Endothelial cell of umbilical vein (primary cell): ENCODE measurements at regions of chr14 and their contacts with region 1.

Region 1: DNA sequence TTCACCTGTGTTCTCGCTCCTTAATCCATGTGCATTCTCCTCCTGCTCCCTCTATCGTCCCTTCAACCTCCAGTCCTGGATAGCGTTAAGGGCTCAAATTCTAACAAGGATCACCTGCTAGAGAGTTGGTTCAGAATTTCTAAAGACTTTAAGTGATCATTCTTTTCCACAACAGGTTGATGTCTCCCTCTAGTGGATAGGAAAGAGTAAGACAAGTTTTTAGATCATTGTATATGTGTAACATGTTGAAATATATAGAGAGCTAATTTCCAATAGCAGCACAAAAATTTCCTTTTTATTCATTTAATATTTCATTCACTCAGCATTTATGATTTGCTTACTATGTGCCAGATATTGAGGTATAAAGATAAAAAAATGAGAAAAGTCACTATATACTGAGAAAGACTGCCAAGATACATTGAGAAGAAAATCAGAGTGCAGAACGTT is 9.3 kb upstream of the ESR2 start:
- DNase-seq: peak; percentile 71
- H3K4me3 ChIP-seq: no peak overlapping the region
- H3K27ac ChIP-seq: no peak overlapping the region
- H3K4me1 ChIP-seq: no peaks in the 10 kb centered on the region
- H3K27me3 ChIP-seq: no peaks in the 10 kb centered on the region
- CTCF ChIP-seq: peak; percentile 48 to 50
- POLR2A ChIP-seq: no peak

Region 2: DNA sequence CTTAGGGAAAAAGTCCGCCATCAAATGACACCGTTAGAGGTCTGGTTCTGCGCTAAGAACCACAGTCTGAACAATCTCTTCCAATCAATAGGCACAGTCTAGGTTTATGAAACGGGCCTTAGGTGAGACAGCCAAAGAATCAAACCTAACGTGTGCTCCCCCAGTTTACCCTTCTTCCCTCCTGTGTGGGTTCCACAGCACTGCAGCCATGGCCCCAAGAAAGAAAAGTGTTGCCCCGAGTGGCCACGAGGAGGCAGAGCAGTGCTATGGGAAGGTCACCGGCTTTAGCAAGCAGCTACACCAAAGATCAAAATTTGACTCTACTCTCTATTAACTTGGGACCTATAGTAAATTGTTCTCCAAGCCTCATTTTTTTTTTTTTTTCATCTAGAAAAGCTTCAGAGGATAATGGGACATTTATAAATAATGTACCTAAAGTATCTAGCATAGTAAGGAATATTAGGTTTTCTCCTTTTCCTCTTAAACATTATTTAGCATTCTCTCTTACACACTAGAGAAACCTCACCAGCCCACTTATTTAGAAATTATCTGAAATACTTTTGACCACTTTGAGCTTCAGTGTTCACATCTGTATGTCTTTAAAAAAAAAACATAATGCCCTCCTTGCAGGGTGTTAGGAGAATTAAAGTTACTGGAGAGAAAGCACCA is 914.6 kb before region 1 on chr14:
- CTCF ChIA-PET with region 1: interaction called, 12 read pairs
- POLR2A ChIA-PET with region 1: no interaction called
- dilution Hi-C with region 1: no loop called
- intact Hi-C with region 1: no loop called
- DNase-seq: peak; percentile 75
- H3K4me3 ChIP-seq: no peak overlapping the region
- H3K27ac ChIP-seq: no peak overlapping the region
- H3K4me1 ChIP-seq: no peaks in the 10 kb centered on the region
- H3K27me3 ChIP-seq: no peaks in the 10 kb centered on the region
- CTCF ChIP-seq: peak; percentile 73 to 81
- POLR2A ChIP-seq: no peak

Region 3: DNA sequence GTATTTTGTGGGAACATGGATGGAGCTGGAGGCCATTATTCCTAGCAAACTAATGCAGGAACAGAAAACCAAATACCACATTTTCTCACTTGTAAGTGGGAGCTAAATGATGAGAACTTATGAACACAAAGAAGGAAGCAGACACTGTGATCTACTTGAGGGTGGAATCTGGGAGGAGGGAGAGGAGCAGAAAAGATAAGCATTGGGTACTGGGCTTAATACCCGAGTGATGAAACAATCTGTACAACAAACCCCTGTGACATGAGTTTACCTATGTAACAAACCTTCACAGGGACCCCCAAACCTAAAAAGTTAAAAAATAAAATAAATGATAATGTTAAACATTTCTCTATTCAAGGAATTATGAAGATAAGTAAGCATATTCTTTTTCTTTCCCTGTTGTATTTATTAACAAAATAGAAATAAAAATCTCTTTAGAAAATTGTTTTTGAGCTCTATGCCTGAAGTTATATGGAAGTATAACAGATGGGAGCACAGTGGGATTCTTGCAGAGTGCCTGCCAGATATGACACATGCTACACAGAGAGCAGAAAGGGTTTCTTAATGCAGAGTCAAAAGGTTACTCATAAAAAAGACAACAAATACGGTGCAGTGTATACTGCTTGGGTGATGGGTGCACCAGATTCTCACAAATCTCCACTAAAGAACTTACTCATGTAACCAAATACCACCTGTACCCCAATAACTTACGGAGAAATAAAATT is 502.7 kb before region 1 on chr14:
- CTCF ChIA-PET with region 1: interaction called, 103 read pairs
- POLR2A ChIA-PET with region 1: no interaction called
- dilution Hi-C with region 1: no loop called
- intact Hi-C with region 1: loop called (anchors 1 kb)
- DNase-seq: no peak
- H3K4me3 ChIP-seq: no peak overlapping the region
- H3K27ac ChIP-seq: no peak overlapping the region
- H3K4me1 ChIP-seq: peaks cover 2% of the 10 kb centered on the region
- H3K27me3 ChIP-seq: no peaks in the 10 kb centered on the region
- CTCF ChIP-seq: no peak
- POLR2A ChIP-seq: no peak

Region 4: DNA sequence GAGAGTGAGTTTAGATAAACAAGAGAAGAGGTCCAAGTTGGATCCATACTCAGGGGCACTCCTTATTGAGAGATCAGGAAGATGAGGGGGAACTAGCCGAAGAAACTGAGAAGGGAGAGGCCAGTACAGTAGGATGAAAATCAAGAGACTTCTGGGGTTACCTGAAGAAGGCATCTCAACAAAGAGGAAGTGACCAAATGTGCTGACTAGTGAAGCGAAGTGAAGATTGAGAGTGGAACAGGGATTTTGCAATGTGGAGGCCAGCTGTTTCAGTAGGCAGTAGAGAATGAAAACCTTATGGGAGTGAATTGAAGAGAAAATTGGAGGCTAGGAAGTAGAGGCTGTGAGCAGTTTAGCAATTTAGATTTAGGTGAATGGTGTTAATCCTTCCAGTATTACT is 297.7 kb before region 1 on chr14:
- CTCF ChIA-PET with region 1: interaction called, 155 read pairs
- POLR2A ChIA-PET with region 1: no interaction called
- dilution Hi-C with region 1: no loop called
- intact Hi-C with region 1: loop called (anchors 1 kb)
- DNase-seq: no peak
- H3K4me3 ChIP-seq: no peak overlapping the region
- H3K27ac ChIP-seq: no peak overlapping the region
- H3K4me1 ChIP-seq: no peaks in the 10 kb centered on the region
- H3K27me3 ChIP-seq: no peaks in the 10 kb centered on the region
- CTCF ChIP-seq: no peak
- POLR2A ChIP-seq: no peak

Region 5: DNA sequence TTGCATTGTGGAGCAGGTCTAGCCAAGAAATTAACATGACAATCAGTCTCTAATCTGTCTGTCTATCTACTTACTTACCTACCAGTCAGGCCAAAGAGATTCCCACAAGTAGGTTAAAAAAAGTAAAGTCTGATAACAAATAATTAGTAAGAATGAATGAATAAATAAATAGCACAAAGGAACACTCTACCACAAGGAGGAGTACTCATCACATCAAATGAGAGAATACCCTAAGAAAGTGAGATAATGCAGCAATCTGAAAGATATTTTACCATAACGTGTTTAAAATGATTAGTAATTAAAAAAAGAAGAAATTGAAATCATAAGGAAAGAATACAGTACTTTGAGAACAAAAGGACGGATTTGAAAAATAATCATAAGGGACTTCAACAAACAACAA is 263.4 kb before region 1 on chr14:
- CTCF ChIA-PET with region 1: interaction called, 79 read pairs
- POLR2A ChIA-PET with region 1: no interaction called
- dilution Hi-C with region 1: no loop called
- intact Hi-C with region 1: loop called (anchors 1 kb)
- DNase-seq: peak; percentile 28
- H3K4me3 ChIP-seq: no peak overlapping the region
- H3K27ac ChIP-seq: no peak overlapping the region
- H3K4me1 ChIP-seq: no peaks in the 10 kb centered on the region
- H3K27me3 ChIP-seq: no peaks in the 10 kb centered on the region
- CTCF ChIP-seq: peak in 1 of 2 donors; percentile 9
- POLR2A ChIP-seq: no peak

Region 6: DNA sequence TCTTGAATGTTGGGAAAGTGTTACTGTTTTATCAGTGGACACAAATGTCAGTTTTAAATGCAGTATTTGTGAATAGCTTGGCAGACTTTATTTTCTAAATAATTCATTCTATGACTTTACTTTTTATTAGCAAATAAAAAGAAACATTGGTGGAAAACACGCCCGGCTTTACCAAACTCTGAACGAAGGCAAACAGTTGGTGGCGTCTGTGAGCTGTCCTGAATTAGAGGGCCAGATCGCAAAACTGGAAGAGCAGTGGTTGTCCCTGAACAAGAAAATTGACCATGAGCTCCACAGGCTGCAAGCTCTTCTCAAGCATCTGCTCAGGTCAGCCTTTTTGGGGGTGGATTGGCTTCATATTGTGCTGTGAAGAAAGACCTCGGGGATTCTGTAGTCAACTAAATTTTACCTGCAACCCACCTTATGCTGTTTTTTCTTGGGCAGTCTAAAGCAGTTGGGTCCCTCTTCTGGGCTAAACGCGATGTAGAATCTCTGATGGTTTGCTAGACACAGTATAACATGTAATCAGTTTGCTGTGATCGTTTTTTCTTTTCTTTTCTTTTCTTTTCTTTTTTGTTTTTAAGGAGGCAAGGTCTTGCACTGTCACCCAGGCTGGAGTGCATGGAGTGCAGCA is 165.7 kb before region 1 on chr14:
- CTCF ChIA-PET with region 1: interaction called, 70 read pairs
- POLR2A ChIA-PET with region 1: no interaction called
- dilution Hi-C with region 1: no loop called
- intact Hi-C with region 1: loop called (anchors 1 kb)
- DNase-seq: peak; percentile 20
- H3K4me3 ChIP-seq: no peak overlapping the region
- H3K27ac ChIP-seq: no peak overlapping the region
- H3K4me1 ChIP-seq: no peaks in the 10 kb centered on the region
- H3K27me3 ChIP-seq: no peaks in the 10 kb centered on the region
- CTCF ChIP-seq: peak in 1 of 2 donors; percentile 22
- POLR2A ChIP-seq: no peak

Region 7: DNA sequence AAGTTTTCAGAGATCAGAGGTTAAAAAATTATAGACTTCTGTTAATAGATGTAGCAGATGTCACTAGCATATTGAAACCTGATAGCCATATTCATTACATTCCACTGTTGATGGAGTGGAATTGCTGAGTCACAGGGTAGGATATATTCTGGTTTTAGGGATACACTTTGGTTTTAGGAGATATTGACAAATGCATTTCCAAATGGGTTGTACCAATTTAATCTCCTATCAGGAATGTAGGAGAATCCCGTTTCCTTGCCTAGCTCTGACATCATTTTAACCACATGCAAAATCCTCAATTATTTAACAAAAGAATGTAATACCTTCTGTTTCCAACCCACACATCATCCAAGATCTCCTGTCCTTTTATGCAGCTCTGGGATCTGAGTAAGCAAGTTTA is 21.4 kb after region 1 on chr14:
- CTCF ChIA-PET with region 1: interaction called, 11 read pairs
- POLR2A ChIA-PET with region 1: no interaction called
- dilution Hi-C with region 1: no loop called
- intact Hi-C with region 1: no loop called
- DNase-seq: no peak
- H3K4me3 ChIP-seq: no peak overlapping the region
- H3K27ac ChIP-seq: no peak overlapping the region
- H3K4me1 ChIP-seq: no peaks in the 10 kb centered on the region
- H3K27me3 ChIP-seq: no peaks in the 10 kb centered on the region
- CTCF ChIP-seq: no peak
- POLR2A ChIP-seq: no peak

Region 8: DNA sequence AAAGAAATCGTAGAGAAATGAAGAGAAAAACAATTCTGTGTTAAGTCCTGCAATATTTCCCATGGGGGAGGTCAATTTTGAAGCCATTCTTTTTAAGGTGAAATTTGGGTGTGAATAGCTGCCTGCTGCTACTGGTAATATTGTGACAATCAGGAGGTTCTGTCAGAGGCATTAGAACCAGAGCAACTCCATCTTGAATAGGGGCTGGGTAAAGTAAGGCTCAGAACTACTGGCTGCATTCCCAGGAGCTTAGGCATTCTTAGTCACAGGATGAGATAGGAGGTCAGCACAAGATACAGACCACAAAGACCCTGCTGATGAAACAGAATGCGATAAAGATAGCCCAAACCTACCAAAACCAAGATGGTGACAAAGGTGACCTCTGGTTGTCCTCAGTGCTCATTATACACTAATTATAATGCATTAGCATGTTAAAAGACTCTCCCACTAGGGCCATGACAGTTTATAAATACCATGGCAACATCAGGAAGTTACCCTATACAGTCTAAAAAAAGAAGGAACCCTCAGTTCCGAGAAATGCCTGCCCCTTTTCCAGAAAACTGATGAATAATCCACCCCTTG is 59.9 kb after region 1 on chr14:
- CTCF ChIA-PET with region 1: no interaction called
- POLR2A ChIA-PET with region 1: no interaction called
- dilution Hi-C with region 1: no loop called
- intact Hi-C with region 1: no loop called
- DNase-seq: peak; percentile 9
- H3K4me3 ChIP-seq: no peak overlapping the region
- H3K27ac ChIP-seq: no peak overlapping the region
- H3K4me1 ChIP-seq: no peaks in the 10 kb centered on the region
- H3K27me3 ChIP-seq: no peaks in the 10 kb centered on the region
- CTCF ChIP-seq: no peak
- POLR2A ChIP-seq: no peak